Activated naive CD4-positive, alpha-beta T cell treated with anti-CD3 and anti-CD28 coated beads for 36 hours (primary cell): ENCODE measurements at regions of chr4 and their contacts with region 1.

Region 1: GRCh38 chr4:169485791-169486742 is 126.3 kb downstream of the NEK1 start:
- DNase-seq: peak; percentile 66
- H3K4me3 Mint-ChIP-seq: no peak overlapping the region
- H3K27ac Mint-ChIP-seq: no peak overlapping the region
- H3K4me1 Mint-ChIP-seq: no peaks in the 10 kb centered on the region
- H3K27me3 Mint-ChIP-seq: no peaks in the 10 kb centered on the region

Region 2: GRCh38 chr4:168183717-168184608 is 1302.1 kb before region 1 on chr4:
- CTCF ChIA-PET with region 1: no interaction called
- intact Hi-C with region 1: loop called (anchors 5 kb)
- DNase-seq: no peak
- H3K4me3 Mint-ChIP-seq: no peak overlapping the region
- H3K27ac Mint-ChIP-seq: no peak overlapping the region
- H3K4me1 Mint-ChIP-seq: no peaks in the 10 kb centered on the region
- H3K27me3 Mint-ChIP-seq: no peaks in the 10 kb centered on the region

Region 3: DNA sequence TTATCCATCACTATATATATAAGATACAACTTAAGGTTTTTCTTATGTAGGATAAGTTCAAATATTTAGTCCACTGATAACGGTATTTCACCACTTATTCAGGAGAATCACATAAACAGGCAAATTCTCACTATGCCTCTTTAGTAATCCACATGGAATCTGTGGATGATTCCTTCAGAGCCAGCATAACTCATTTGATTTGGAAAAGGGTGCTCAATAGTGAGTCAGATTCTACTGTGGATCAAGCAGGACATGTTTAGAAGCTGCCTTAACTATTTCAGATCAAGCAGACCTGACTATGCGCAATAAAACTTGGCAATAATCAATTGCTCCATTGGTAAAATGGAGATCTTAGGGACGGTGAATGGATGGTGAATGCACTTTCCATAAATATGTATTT is 660.1 kb before region 1 on chr4:
- CTCF ChIA-PET with region 1: no interaction called
- intact Hi-C with region 1: loop called (anchors 10 kb)
- DNase-seq: no peak
- H3K4me3 Mint-ChIP-seq: no peak overlapping the region
- H3K27ac Mint-ChIP-seq: no peak overlapping the region
- H3K4me1 Mint-ChIP-seq: no peaks in the 10 kb centered on the region
- H3K27me3 Mint-ChIP-seq: peaks cover 19% of the 10 kb centered on the region

Region 4: DNA sequence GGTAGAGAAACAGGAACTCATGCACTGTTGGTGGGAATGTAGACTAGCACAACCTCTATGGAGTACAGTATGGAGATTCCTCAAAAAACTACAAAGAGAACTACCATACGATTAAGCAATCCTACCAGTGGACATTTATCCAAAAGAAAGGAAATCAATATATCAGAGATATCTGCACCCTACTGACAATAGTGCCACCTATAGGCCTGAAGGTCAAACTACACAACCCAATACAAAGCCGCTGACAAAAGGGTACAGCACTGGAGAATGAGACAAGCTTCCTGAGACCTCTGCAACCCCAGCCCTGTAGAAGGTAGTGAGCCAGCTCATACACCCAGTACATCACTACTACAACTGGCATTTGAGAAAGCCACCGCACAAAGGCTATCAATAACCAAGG is 543.1 kb before region 1 on chr4:
- CTCF ChIA-PET with region 1: no interaction called
- intact Hi-C with region 1: no loop called
- DNase-seq: no peak
- H3K4me3 Mint-ChIP-seq: no peak overlapping the region
- H3K27ac Mint-ChIP-seq: no peak overlapping the region
- H3K4me1 Mint-ChIP-seq: no peaks in the 10 kb centered on the region
- H3K27me3 Mint-ChIP-seq: no peaks in the 10 kb centered on the region

Region 5: DNA sequence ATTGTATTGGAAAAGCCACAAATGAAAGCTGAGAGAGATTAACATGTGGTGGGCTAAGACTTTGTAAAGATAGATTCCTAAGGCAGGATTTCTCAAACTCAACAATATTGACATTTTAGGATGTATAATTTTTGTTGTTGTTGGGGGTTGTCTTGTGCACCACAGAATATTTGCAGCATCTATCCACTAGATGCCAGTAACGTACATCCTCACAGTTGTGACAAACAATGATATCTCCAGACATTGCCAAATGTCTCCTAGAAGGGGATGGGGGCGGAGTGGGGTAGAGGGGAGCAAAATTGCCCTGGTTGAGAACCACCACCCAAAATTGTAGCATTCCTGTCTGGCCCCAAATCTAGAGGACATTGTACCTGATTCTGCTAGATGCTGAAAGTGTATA is 461.3 kb before region 1 on chr4:
- CTCF ChIA-PET with region 1: interaction called, 5 read pairs
- intact Hi-C with region 1: loop called (anchors 1 kb)
- DNase-seq: no peak
- H3K4me3 Mint-ChIP-seq: no peak overlapping the region
- H3K27ac Mint-ChIP-seq: no peak overlapping the region
- H3K4me1 Mint-ChIP-seq: no peaks in the 10 kb centered on the region
- H3K27me3 Mint-ChIP-seq: peaks cover 7% of the 10 kb centered on the region

Region 6: GRCh38 chr4:169566021-169566818 is 80.2 kb after region 1 on chr4:
- CTCF ChIA-PET with region 1: interaction called, 3 read pairs
- intact Hi-C with region 1: loop called (anchors 2 kb)
- DNase-seq: peak; percentile 47
- H3K4me3 Mint-ChIP-seq: no peak overlapping the region
- H3K27ac Mint-ChIP-seq: no peak overlapping the region
- H3K4me1 Mint-ChIP-seq: peaks cover 7% of the 10 kb centered on the region
- H3K27me3 Mint-ChIP-seq: no peaks in the 10 kb centered on the region